GM12878 (cell line): ENCODE measurements at regions of chr2 and their contacts with region 1.

Region 1: GRCh38 chr2:202178342-202178958 is 59.9 kb downstream of the SUMO1 start:
- DNase-seq: peak; percentile 24
- ATAC-seq: peak; percentile 97
- H3K4me3 ChIP-seq: no peak overlapping the region
- H3K27ac ChIP-seq: no peak overlapping the region
- H3K4me1 ChIP-seq: no peaks in the 10 kb centered on the region
- H3K27me3 ChIP-seq: no peaks in the 10 kb centered on the region
- CTCF ChIP-seq: peak; percentile 77 to 81 (median 78)
- EP300 ChIP-seq: no peak
- POLR2A ChIP-seq: no peak
- RAD21 ChIP-seq: peak; percentile 97

Region 2: DNA sequence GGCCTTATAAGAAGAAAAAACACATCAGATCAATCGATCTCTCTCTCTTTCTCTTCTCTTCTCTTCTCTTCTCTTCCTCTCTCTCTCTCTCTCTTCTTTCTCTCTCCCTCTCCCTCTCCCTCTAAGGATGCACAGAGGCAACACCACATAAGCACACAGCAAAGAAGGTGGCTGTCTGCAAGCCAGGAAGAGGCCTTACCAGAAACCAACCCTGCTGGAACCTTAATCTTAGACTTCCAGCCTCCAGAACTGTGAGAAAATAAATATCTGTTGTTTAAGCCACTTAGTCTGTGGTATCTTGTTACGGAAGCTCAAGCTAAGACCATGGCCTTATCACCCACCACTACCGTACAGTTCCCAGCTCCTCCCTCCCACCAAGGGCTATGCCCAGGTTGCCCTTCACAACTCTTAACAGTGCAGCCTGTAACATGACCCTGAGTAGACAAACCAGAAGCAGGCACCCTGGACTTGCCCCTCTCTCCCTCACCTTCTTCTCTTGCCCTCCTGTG is 510.0 kb before region 1 on chr2:
- CTCF ChIA-PET with region 1: no interaction called
- POLR2A ChIA-PET with region 1: no interaction called
- RAD21 ChIA-PET with region 1: no interaction called
- SMC1A ChIA-PET with region 1: no interaction called
- in situ Hi-C with region 1: loop called (anchors 10 kb)
- intact Hi-C with region 1: loop called (anchors 5 kb)
- DNase-seq: no peak
- ATAC-seq: no peak
- H3K4me3 ChIP-seq: no peak overlapping the region
- H3K27ac ChIP-seq: no peak overlapping the region
- H3K4me1 ChIP-seq: no peaks in the 10 kb centered on the region
- H3K27me3 ChIP-seq: no peaks in the 10 kb centered on the region
- CTCF ChIP-seq: no peak
- EP300 ChIP-seq: no peak
- POLR2A ChIP-seq: no peak
- RAD21 ChIP-seq: no peak

Region 3: GRCh38 chr2:201680743-201681142 is 497.7 kb before region 1 on chr2:
- CTCF ChIA-PET with region 1: interaction called, 5 read pairs
- POLR2A ChIA-PET with region 1: no interaction called
- RAD21 ChIA-PET with region 1: no interaction called
- SMC1A ChIA-PET with region 1: no interaction called
- in situ Hi-C with region 1: no loop called
- intact Hi-C with region 1: loop called (anchors 5 kb)
- DNase-seq: no peak
- ATAC-seq: peak; percentile 71
- H3K4me3 ChIP-seq: no peak overlapping the region
- H3K27ac ChIP-seq: no peak overlapping the region
- H3K4me1 ChIP-seq: no peaks in the 10 kb centered on the region
- H3K27me3 ChIP-seq: 0 out of 4 replicates have a peak, but pooled peaks cover 0 to 3% of the 10 kb centered on the region in 2 experiments
- CTCF ChIP-seq: peak; percentile 37 to 68 (median 58)
- EP300 ChIP-seq: no peak
- POLR2A ChIP-seq: no peak
- RAD21 ChIP-seq: 0 out of 2 replicates have a peak, but pooled peaks have one; percentile 28

Region 4: GRCh38 chr2:201795607-201796477 is 382.6 kb before region 1 on chr2:
- CTCF ChIA-PET with region 1: interaction called, 4 read pairs
- POLR2A ChIA-PET with region 1: no interaction called
- RAD21 ChIA-PET with region 1: no interaction called
- SMC1A ChIA-PET with region 1: no interaction called
- in situ Hi-C with region 1: no loop called
- intact Hi-C with region 1: loop called (anchors 2 kb)
- DNase-seq: no peak
- ATAC-seq: peak; percentile 46; the same call in 1 of the 3 replicates
- H3K4me3 ChIP-seq: no peak overlapping the region
- H3K27ac ChIP-seq: no peak overlapping the region
- H3K4me1 ChIP-seq: no peaks in the 10 kb centered on the region
- H3K27me3 ChIP-seq: no peaks in the 10 kb centered on the region
- CTCF ChIP-seq: peak; percentile 42 to 69 (median 54); a peak in 5 of 6 replicates
- EP300 ChIP-seq: no peak
- POLR2A ChIP-seq: no peak
- RAD21 ChIP-seq: peak; percentile 59

Region 5: DNA sequence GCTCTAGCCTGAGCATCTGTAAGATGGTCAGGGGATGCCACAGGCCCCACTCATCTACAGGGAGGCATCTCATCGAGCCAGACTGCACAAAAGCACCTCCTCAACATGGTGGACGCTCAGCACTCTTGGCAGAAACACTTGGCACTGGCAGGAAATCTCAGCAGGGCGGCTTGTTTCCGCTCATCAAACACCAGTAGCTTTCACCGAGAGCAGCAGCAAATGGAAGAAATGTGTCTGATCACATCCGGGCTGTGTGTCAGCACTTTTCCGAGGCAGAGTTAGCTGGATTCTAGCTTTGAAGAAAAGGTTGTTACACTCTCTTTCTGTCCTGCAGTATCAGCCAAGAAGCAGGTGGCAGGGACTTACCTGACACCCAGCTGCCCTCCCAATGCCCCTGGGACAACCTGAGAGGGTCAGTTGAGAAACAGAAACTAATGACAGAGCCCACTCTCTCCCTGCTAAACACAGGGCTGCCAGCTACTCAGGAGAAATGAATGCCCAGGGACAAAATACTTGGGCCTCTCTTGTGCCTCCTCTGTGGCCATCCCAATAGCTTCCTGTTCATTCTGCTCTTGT is 213.7 kb before region 1 on chr2:
- CTCF ChIA-PET with region 1: interaction called, 8 read pairs
- POLR2A ChIA-PET with region 1: no interaction called
- RAD21 ChIA-PET with region 1: interaction called, 4 read pairs
- SMC1A ChIA-PET with region 1: interaction called, 5 read pairs
- in situ Hi-C with region 1: no loop called
- intact Hi-C with region 1: loop called (anchors 5 kb)
- DNase-seq: no peak
- ATAC-seq: peak; percentile 24; the same call in 1 of the 3 replicates
- H3K4me3 ChIP-seq: no peak overlapping the region
- H3K27ac ChIP-seq: no peak overlapping the region
- H3K4me1 ChIP-seq: no peaks in the 10 kb centered on the region
- H3K27me3 ChIP-seq: no peaks in the 10 kb centered on the region
- CTCF ChIP-seq: no peak
- EP300 ChIP-seq: no peak
- POLR2A ChIP-seq: no peak
- RAD21 ChIP-seq: no peak

Region 6: DNA sequence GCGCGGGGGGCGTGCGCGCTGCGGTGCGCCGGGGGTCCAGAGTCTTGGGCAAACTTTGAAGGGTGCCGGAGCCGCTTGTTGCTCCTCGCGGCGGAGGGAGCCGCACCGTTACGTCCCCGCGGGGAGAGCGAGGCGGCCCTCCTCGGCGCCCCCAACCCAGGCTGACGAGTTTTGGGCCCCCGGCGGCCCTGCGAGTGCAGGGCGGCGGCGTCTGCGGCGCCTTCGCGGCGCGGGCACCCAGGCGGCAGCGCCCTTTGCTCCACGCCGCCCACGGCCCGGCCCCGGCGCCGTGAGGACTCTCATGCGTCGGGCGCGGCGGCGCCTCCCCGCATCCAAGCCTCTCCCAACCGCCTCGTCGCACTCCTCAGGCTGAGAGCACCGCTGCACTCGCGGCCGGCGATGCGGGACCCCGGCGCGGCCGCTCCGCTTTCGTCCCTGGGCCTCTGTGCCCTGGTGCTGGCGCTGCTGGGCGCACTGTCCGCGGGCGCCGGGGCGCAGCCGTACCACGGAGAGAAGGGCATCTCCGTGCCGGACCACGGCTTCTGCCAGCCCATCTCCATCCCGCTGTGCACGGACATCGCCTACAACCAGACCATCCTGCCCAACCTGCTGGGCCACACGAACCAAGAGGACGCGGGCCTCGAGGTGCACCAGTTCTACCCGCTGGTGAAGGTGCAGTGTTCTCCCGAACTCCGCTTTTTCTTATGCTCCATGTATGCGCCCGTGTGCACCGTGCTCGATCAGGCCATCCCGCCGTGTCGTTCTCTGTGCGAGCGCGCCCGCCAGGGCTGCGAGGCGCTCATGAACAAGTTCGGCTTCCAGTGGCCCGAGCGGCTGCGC is 144.0 kb before region 1 on chr2:
- CTCF ChIA-PET with region 1: no interaction called
- POLR2A ChIA-PET with region 1: interaction called, 5 read pairs
- RAD21 ChIA-PET with region 1: no interaction called
- SMC1A ChIA-PET with region 1: no interaction called
- in situ Hi-C with region 1: no loop called
- intact Hi-C with region 1: loop called (anchors 5 kb)
- DNase-seq: no peak
- ATAC-seq: peak; percentile 5
- H3K4me3 ChIP-seq: peak overlapping the region; percentile 90
- H3K27ac ChIP-seq: no peak overlapping the region
- H3K4me1 ChIP-seq: no peaks in the 10 kb centered on the region; the same call in 1 of the 2 replicates
- H3K27me3 ChIP-seq: peaks cover 0 to 15% of the 10 kb centered on the region in 2 experiments; a peak in 2 of 4 replicates
- CTCF ChIP-seq: no peak
- EP300 ChIP-seq: no peak
- POLR2A ChIP-seq: no peak
- RAD21 ChIP-seq: no peak

Region 7: GRCh38 chr2:202104278-202104870 is 74.1 kb before region 1 on chr2:
- CTCF ChIA-PET with region 1: interaction called, 51 read pairs
- POLR2A ChIA-PET with region 1: no interaction called
- RAD21 ChIA-PET with region 1: no interaction called
- SMC1A ChIA-PET with region 1: interaction called, 11 read pairs
- in situ Hi-C with region 1: no loop called
- intact Hi-C with region 1: loop called (anchors 1 kb)
- DNase-seq: peak; percentile 13
- ATAC-seq: peak; percentile 95
- H3K4me3 ChIP-seq: no peak overlapping the region
- H3K27ac ChIP-seq: no peak overlapping the region
- H3K4me1 ChIP-seq: no peaks in the 10 kb centered on the region
- H3K27me3 ChIP-seq: peaks cover 2 to 3% of the 10 kb centered on the region in 2 experiments; a peak in 1 of 4 replicates
- CTCF ChIP-seq: peak; percentile 65 to 91 (median 81)
- EP300 ChIP-seq: no peak
- POLR2A ChIP-seq: no peak
- RAD21 ChIP-seq: peak; percentile 77

Region 8: GRCh38 chr2:202588647-202589581 is 410.5 kb after region 1 on chr2:
- CTCF ChIA-PET with region 1: no interaction called
- POLR2A ChIA-PET with region 1: no interaction called
- RAD21 ChIA-PET with region 1: no interaction called
- SMC1A ChIA-PET with region 1: no interaction called
- in situ Hi-C with region 1: no loop called
- intact Hi-C with region 1: no loop called
- DNase-seq: peak; percentile 35
- ATAC-seq: peak; percentile 99
- H3K4me3 ChIP-seq: no peak overlapping the region
- H3K27ac ChIP-seq: no peak overlapping the region
- H3K4me1 ChIP-seq: peaks cover 3% of the 10 kb centered on the region
- H3K27me3 ChIP-seq: no peaks in the 10 kb centered on the region
- CTCF ChIP-seq: peak; percentile 90 to 92 (median 90)
- EP300 ChIP-seq: peak in 1 of 2 experiments; percentile 29; a peak in 1 of 4 replicates
- POLR2A ChIP-seq: no peak
- RAD21 ChIP-seq: peak; percentile 94